ENCODE measurements at regions of chr9 and their contacts with region 1.

Region 1: DNA sequence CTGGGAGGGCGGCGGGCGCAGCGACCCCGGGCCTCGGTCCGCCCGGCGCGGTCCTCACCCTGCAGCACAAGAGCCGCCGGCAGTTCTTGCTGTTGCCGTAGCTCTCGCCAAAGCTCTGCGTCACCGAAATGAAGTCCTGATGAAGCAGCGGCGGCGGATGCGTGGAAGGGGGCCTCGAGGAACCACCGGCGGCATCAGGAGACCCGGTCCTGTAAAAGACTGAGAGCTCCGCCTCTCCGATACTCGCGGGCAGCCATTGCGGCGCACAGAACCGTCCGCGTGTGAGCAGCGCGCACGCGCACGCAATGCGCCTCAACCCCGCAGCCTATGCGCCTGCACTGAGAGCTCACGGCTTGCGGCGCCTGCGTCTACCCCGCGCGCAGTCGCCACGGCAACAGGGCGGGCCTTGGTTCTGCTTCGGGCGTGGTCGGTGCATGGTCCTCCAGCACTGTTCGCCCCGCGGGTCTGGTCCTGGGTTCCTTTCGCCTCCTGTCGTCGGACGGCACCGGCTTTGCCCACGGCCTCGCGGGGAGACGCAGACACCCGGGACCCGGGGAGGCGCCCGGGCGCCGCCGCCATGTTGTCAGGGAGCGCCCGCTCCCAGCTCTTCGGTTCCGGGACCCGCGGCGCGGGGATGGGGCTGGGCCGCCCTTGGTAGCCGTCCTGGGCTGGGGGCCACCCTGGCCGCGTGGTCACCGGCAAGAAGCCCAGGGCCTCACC is 9.3 kb upstream of the GRIN1 start:
- DNase-seq: peak; percentile 97
- H3K4me3 Mint-ChIP-seq: peak overlapping the region; percentile 86
- H3K27ac Mint-ChIP-seq: peak overlapping the region; percentile 79
- H3K4me1 Mint-ChIP-seq: peaks cover 22% of the 10 kb centered on the region
- H3K27me3 Mint-ChIP-seq: peaks cover 5% of the 10 kb centered on the region

Region 2: GRCh38 chr9:136939996-136940525 is 189.6 kb before region 1 on chr9:
- intact Hi-C with region 1: no loop called
- DNase-seq: no peak
- H3K4me3 Mint-ChIP-seq: no peak overlapping the region
- H3K27ac Mint-ChIP-seq: no peak overlapping the region
- H3K4me1 Mint-ChIP-seq: peaks cover 3% of the 10 kb centered on the region
- H3K27me3 Mint-ChIP-seq: no peaks in the 10 kb centered on the region

Region 3: GRCh38 chr9:137114610-137115391 is 14.8 kb before region 1 on chr9 and contains the start of gene DPP7:
- intact Hi-C with region 1: loop called (anchors 2 kb)
- DNase-seq: peak; percentile 96
- H3K4me3 Mint-ChIP-seq: peak within 1 kb of the TSS; percentile 83
- H3K27ac Mint-ChIP-seq: peak within 1 kb of the TSS; percentile 78
- H3K4me1 Mint-ChIP-seq: peaks cover 8% of the 10 kb centered on the region
- H3K27me3 Mint-ChIP-seq: no peaks in the 10 kb centered on the region
- total RNA-seq, gene DPP7: 365 and 375 TPM in 2 replicates

Region 4: DNA sequence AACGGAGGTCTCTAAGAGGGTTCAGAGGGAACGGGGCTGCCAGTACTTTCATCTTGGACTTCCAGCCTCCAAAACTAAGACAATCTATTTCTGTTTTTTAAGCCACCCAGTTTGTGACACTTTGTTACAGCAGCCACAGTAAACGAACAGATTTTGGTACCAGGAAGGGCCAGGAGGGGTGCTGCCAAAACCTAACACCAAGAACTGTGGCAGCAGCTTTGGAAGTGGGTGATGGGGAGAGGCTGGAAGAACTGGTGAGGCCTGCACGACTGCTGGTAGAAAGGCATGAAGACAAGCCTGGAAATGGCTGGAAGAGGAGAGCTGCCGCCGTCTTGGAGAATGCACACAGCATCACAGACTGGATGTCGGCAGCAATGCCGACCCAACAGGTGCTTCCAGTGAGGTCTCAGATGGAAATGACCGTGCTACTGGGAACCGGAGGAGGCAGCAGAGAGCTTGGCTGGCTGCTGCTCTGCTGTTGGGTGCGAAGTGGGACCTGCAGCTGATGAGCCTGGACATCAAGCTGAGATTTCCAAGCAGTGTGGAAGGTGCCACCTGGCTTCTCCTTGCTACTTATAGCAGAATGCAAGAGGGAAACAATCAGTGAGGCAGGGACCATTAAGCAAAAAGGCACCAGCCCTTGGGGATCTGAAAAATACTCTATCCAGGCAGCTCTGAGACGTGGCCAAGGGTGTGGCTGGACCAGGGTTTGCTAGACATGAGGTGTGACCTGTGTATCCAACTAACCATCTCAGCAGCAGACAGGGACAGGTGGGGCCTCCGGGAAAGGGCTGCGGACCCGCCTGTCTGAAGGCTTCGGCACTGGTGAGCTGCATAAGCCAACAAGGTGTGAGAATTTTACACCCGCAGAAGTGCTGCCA is 46.9 kb after region 1 on chr9:
- intact Hi-C with region 1: loop called (anchors 5 kb)
- DNase-seq: peak; percentile 72
- H3K4me3 Mint-ChIP-seq: no peak overlapping the region
- H3K27ac Mint-ChIP-seq: no peak overlapping the region
- H3K4me1 Mint-ChIP-seq: no peaks in the 10 kb centered on the region
- H3K27me3 Mint-ChIP-seq: peaks cover 10% of the 10 kb centered on the region

Region 5: GRCh38 chr9:137200311-137201204 is 70.9 kb after region 1 on chr9 and contains the start of gene TPRN:
- intact Hi-C with region 1: loop called (anchors 1 kb)
- DNase-seq: peak; percentile 100
- H3K4me3 Mint-ChIP-seq: peak within 1 kb of the TSS; percentile 87
- H3K27ac Mint-ChIP-seq: peak within 1 kb of the TSS; percentile 65
- H3K4me1 Mint-ChIP-seq: peaks cover 14% of the 10 kb centered on the region
- H3K27me3 Mint-ChIP-seq: peaks cover 2% of the 10 kb centered on the region
- total RNA-seq, gene TPRN: 15.1 and 16.3 TPM in 2 replicates

Region 6: GRCh38 chr9:137240861-137241489 is 111.4 kb after region 1 on chr9 and contains the start of gene TUBB4B:
- intact Hi-C with region 1: loop called (anchors 2 kb)
- DNase-seq: peak; percentile 99
- H3K4me3 Mint-ChIP-seq: peak within 1 kb of the TSS; percentile 90
- H3K27ac Mint-ChIP-seq: peak within 1 kb of the TSS; percentile 95
- H3K4me1 Mint-ChIP-seq: peaks cover 19% of the 10 kb centered on the region
- H3K27me3 Mint-ChIP-seq: peaks cover 2% of the 10 kb centered on the region
- total RNA-seq, gene TUBB4B: 292 and 299 TPM in 2 replicates

Region 7: DNA sequence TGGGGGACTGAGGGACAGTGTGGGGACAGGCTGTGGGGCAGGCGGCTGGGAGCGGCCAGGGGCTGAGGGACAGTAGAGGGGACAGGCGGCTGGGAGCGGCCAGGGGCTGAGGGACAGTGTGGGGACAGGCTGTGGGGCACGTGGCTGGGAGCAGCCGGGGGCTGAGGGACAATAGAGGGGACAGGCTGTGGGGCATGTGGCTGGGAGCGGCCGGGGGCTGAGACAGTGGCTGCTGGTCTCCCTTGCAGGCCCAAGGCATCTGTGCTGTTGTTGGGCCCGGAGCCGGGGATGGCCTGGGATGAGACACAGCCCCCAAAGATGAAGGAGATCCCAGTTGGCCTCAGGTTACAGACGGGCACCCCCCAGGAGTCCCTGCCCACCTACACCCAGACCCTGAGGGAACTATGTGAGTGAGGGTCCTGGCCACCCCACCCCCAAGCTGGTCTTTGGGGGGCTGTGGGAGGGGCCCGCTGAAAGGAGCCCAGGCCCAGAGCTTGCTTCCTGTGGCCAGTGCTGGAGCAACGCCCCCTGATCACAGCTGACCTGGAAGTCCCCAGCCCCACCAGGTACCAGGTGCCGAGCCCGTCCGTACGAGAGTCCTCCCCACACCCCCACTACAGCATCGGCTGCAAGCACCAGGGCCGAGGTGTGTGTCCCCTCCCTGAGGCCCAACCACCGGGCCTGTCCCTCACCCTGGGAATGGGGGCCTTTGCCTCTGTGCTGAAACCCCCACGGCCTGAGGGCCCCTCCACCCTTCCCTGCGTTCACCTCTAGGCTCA is 122.1 kb after region 1 on chr9:
- intact Hi-C with region 1: no loop called
- DNase-seq: no peak
- H3K4me3 Mint-ChIP-seq: no peak overlapping the region
- H3K27ac Mint-ChIP-seq: no peak overlapping the region
- H3K4me1 Mint-ChIP-seq: peaks cover 10% of the 10 kb centered on the region
- H3K27me3 Mint-ChIP-seq: peaks cover 1% of the 10 kb centered on the region

Region 8: GRCh38 chr9:137618105-137619067 is 488.8 kb after region 1 on chr9 and contains the start of gene EHMT1:
- intact Hi-C with region 1: no loop called
- DNase-seq: peak; percentile 98
- H3K4me3 Mint-ChIP-seq: peak within 1 kb of the TSS; percentile 90
- H3K27ac Mint-ChIP-seq: peak within 1 kb of the TSS; percentile 92
- H3K4me1 Mint-ChIP-seq: peaks cover 35% of the 10 kb centered on the region
- H3K27me3 Mint-ChIP-seq: no peaks in the 10 kb centered on the region
- total RNA-seq, gene EHMT1: 93.6 and 99.4 TPM in 2 replicates